Activated naive CD8-positive, alpha-beta T cell treated with anti-CD3 and anti-CD28 coated beads, Interleukin-2, amount 10 ng/mL, durations not matched to agents 7 days and 5 days (primary cell): ENCODE measurements at regions of chr11 and their contacts with region 1.

Region 1: DNA sequence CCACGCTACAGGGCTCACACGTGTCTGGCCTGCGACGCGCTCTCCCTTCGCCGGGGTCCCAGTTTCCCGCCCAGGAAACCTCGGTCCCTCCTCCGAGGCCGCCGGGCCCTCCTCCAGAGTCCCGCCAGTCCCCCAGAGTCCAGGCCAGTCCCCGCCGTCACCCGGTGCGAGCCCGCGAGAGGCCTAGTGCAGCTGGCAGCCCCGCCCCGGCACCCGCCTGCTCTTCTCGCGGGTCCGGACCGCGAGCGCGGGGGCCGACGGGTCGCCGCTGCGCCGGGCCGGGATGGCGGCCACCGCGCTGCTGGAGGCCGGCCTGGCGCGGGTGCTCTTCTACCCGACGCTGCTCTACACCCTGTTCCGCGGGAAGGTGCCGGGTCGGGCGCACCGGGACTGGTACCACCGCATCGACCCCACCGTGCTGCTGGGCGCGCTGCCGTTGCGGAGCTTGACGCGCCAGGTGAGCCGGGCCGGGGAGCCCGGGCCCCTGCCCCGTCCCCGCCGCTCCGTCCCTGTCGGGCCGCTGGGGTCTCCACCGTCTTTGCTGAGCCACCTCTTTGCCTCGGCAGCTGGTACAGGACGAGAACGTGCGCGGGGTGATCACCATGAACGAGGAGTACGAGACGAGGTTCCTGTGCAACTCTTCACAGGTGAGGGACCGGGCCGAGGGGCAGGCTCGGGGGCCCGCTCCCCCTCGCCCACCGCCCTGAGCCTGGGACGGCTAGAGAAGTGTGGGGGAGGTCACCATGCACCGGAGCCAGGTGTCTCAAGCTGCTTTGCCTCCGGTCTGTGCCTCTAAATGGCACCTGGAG is at the start of gene PTPMT1:
- DNase-seq: peak; percentile 81
- ATAC-seq: peak; percentile 94
- H3K4me3 Mint-ChIP-seq: peak within 1 kb of the TSS; percentile 89
- H3K27ac Mint-ChIP-seq: peak within 1 kb of the TSS; percentile 85
- H3K4me1 Mint-ChIP-seq: peaks cover 12% of the 10 kb centered on the region
- H3K27me3 Mint-ChIP-seq: no peaks in the 10 kb centered on the region
- total RNA-seq, gene PTPMT1: 37.9 to 39.3 TPM

Region 2: DNA sequence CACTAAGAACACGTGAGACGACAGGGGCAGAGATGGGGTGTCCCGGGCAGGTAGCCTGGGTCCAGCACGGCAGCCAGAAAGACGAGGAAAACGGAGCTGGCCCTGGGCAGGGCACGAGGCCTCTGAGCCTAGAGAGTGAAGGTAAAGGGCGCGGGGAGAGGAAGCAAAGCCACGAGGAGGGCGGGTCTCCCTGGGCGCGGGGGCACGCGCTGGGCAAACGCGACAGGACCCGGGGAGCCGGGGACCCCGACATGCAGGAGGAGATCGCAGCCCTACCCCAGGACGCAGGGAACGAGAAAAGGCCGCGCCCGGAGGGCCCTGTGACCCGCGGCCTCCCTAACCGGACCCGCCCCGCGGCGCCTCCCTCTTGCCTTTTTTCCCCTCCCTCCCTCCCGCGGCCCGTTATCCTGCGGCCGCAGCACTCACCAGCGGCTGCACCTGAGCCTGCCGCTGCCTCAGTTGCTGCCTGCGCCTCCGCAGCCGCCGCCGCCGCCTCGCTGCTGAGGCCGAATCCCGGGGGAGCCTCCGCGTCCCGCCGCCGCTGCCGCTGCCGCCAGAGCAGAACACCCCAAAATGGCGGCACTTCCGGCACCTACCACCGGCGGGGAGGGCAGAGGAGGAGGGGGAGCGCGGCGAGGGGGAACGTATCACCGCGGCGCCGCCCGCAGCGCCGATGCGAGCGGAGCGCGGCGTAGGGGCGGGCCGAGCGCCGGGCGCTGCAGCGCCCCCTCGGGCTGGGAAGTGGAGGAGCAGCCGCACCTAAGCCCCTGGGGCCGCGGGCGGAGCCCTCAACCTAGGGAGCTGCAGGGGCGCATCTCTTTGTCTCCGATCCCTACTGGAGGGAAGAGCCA is 12.8 kb before region 1 on chr11 and contains the start of gene CELF1:
- POLR2A ChIA-PET with region 1: interaction called, 36 read pairs
- DNase-seq: peak; percentile 95
- ATAC-seq: peak; percentile 95
- H3K4me3 Mint-ChIP-seq: peak within 1 kb of the TSS; percentile 90
- H3K27ac Mint-ChIP-seq: peak within 1 kb of the TSS; percentile 92
- H3K4me1 Mint-ChIP-seq: peaks cover 30% of the 10 kb centered on the region
- H3K27me3 Mint-ChIP-seq: no peaks in the 10 kb centered on the region
- total RNA-seq, gene CELF1: 102 to 113 TPM

Region 3: GRCh38 chr11:47578524-47579460 is 13.2 kb after region 1 on chr11 and contains the starts of genes KBTBD4 and NDUFS3:
- POLR2A ChIA-PET with region 1: interaction called, 49 read pairs
- DNase-seq: peak; percentile 94
- ATAC-seq: peak; percentile 95
- H3K4me3 Mint-ChIP-seq: peak within 1 kb of the TSS; percentile 99
- H3K27ac Mint-ChIP-seq: peak within 1 kb of the TSS; percentile 96
- H3K4me1 Mint-ChIP-seq: peaks cover 19% of the 10 kb centered on the region
- H3K27me3 Mint-ChIP-seq: no peaks in the 10 kb centered on the region
- total RNA-seq, gene KBTBD4: 18.8 to 19.0 TPM
- total RNA-seq, gene NDUFS3: 105 to 108 TPM